ENCODE measurements at regions of chr1 and their contacts with region 1.

Region 1: DNA sequence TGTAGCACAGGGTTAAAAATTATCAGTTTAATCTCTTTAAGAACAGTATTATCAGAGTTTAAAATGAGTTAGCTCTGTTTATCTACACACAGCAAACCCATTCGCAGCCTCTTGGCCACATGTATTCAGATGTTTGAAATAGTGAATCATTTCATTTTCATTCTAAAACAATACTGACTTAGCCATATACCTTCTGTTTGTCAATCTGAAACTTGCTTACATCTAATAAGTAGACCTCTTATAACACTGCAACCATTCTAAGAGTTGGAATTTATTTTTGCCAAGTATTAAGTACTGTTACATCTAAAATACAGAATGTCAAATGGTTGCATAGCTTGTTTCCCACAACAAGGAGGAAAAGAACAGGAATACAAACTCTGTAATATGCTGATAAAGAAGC is 25.4 kb downstream of the ANGEL2 start:
- DNase-seq: no peak
- H3K4me3 ChIP-seq: no peak overlapping the region
- H3K27ac ChIP-seq: no peak overlapping the region
- H3K4me1 ChIP-seq: no peaks in the 10 kb centered on the region
- H3K27me3 ChIP-seq: no peaks in the 10 kb centered on the region
- CTCF ChIP-seq: no peak

Region 2: DNA sequence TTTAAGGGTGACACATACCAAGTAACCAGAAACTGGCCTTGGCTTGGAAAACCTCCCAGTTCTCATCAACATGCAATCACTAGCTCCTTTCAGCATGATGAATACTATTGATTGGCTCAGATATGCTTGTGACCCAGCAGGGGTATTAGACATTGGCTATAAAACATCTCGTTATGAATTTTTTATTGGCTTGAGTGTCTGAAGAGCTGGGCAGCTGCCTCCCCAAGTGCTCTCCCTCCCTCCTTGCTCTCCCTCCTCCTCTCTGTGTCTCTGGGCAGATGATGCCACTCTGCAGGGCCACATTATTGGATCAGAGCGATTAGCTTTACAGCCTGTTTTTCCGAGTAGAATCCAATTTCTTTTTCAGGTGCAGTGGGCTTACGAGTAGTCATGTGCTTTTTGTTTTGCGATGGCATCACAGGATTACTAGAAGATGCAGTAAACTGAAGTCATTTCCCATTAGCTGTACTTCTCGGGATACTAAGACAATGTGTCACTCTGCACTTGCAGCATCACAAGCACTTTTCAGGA is 461.0 kb before region 1 on chr1:
- intact Hi-C with region 1: no loop called
- DNase-seq: no peak
- H3K4me3 ChIP-seq: no peak overlapping the region
- H3K27ac ChIP-seq: no peak overlapping the region
- H3K4me1 ChIP-seq: no peaks in the 10 kb centered on the region
- H3K27me3 ChIP-seq: no peaks in the 10 kb centered on the region
- CTCF ChIP-seq: no peak

Region 3: GRCh38 chr1:212814537-212815334 is 175.5 kb before region 1 on chr1:
- intact Hi-C with region 1: loop called (anchors 10 kb)
- DNase-seq: no peak
- H3K4me3 ChIP-seq: no peak overlapping the region
- H3K27ac ChIP-seq: no peak overlapping the region
- H3K4me1 ChIP-seq: no peaks in the 10 kb centered on the region
- H3K27me3 ChIP-seq: no peaks in the 10 kb centered on the region
- CTCF ChIP-seq: peak in 1 of 2 experiments; percentile 18

Region 4: DNA sequence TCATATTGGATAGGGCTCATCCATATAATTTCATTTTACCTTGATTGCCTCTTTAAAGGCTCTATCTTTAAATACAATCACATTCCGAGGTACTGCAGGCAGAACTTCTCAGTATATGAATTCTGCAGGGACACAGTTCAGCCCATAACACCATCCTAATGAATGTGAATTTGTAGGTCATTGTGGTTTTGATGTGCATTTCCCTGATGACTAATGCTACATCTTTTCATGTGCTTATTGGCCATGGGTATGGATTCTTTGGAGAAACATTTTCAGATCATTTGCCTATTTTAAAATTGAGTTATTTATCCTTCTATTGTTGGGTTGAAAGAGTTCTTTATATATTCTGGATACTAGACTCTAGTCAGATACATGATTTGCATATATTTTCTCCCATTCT is 51.2 kb after region 1 on chr1:
- intact Hi-C with region 1: no loop called
- DNase-seq: no peak
- H3K4me3 ChIP-seq: no peak overlapping the region
- H3K27ac ChIP-seq: no peak overlapping the region
- H3K4me1 ChIP-seq: no peaks in the 10 kb centered on the region
- H3K27me3 ChIP-seq: peaks cover 0 to 15% of the 10 kb centered on the region in 2 donors
- CTCF ChIP-seq: no peak